KBM-7 (cell line): ENCODE measurements at regions of chr5 and their contacts with region 1.

Region 1: GRCh38 chr5:72523960-72524582 is 16.9 kb upstream of the ZNF366 start:
- DNase-seq: peak; percentile 64

Region 2: GRCh38 chr5:72366324-72366976 is 157.6 kb before region 1 on chr5:
- in situ Hi-C with region 1: loop called (anchors 25 kb)
- DNase-seq: peak; percentile 77